Posterior vena cava (tissue), 2 donors: ENCODE measurements at regions of chr19 and their contacts with region 1.

Region 1: DNA sequence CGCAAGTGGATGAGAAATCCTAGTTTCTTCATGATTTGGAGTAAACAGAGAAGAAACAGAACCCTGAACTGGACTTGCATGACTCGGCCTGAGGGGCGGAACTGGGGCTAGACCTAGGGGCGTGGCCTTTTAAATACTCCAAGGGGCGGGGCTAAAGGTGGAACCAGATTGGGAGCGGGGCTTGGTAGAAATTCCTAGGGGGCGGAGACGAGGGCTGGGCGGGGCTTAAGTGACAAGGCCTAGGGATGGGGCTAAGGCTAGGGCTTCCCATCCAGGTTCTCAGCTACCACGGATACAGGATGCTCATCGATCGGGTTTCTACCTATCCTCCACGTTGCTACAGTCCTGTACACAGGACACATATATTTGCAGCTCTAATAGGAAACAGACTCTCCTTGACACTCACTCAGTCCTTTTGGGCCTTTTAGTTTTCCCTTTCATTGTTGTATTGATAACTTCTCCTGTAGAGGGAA is 372 bp upstream of the ZNF699 start:
- DNase-seq: peak; percentile 97

Region 2: GRCh38 chr19:9370738-9371619 is 61.0 kb after region 1 on chr19:
- intact Hi-C with region 1: no loop called
- DNase-seq: no peak

Region 3: DNA sequence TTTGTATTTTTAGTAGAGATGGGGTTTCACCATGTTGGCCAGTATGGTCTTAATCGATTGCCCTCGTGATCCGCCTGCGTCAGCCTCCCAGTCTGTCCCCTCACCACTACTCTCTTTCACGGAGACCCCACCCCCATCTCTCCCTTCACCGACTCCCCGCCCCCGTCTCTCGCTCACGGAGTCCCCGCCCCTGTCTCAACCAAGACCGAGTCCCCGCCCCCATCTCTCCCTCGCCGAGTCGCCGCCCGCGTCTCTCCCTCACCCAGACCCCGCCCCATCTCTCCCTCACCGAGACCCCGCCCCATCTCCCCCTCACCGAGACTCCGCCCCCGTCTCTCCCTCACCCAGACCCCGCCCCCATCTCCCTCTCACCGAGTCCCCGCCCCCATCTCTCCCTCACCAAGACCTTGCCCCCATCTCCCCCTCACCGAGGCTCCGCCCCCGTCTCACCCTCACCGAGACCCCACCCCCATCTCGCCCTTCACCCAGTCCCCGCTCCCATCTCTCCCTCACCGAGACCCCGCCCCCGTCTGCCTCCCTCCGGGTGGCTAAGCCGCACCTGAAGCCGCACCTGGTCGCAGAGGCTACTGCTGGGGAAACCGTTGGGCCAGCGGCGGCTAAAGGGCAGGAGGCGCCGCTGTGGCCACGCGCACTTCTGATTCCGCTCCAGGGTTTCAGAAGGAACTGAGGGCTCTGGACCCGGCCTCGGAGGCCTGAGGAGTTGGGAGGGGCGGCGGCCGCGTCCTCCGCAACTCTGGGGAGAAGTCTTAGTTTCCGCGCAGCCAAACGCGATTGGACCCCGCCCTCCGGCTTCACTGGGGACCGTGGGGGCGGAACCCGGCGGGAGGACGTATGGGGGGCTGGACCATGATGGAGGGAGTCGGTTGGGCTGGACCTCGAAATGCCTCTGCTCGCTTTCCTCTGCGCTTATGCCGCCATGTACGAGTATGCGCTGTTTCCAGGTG is 475.6 kb after region 1 on chr19:
- intact Hi-C with region 1: loop called (anchors 10 kb)
- DNase-seq: peak; percentile 99